Right lobe of liver (tissue), 6 donors: ENCODE measurements at regions of chr2 and their contacts with region 1.

Region 1: GRCh38 chr2:16773080-16773713 is 107.6 kb upstream of the CYRIA start:
- DNase-seq: no peak
- ATAC-seq: peak; percentile 63 to 75 (median 70)
- H3K4me3 ChIP-seq: no peak overlapping the region
- H3K27ac ChIP-seq: no peak overlapping the region
- H3K4me1 ChIP-seq: peaks cover 0 to 5% (median 1%) of the 10 kb centered on the region in 4 donors
- H3K27me3 ChIP-seq: no peaks in the 10 kb centered on the region
- CTCF ChIP-seq: peak; percentile 52 to 73 (median 64)
- POLR2A ChIP-seq: no peak

Region 2: GRCh38 chr2:16881136-16881535 is 107.9 kb after region 1 on chr2:
- intact Hi-C with region 1: no loop called
- DNase-seq: no peak
- ATAC-seq: no peak
- H3K4me3 ChIP-seq: no peak overlapping the region
- H3K27ac ChIP-seq: no peak overlapping the region
- H3K4me1 ChIP-seq: no peaks in the 10 kb centered on the region
- H3K27me3 ChIP-seq: no peaks in the 10 kb centered on the region
- CTCF ChIP-seq: no peak
- POLR2A ChIP-seq: no peak

Region 3: DNA sequence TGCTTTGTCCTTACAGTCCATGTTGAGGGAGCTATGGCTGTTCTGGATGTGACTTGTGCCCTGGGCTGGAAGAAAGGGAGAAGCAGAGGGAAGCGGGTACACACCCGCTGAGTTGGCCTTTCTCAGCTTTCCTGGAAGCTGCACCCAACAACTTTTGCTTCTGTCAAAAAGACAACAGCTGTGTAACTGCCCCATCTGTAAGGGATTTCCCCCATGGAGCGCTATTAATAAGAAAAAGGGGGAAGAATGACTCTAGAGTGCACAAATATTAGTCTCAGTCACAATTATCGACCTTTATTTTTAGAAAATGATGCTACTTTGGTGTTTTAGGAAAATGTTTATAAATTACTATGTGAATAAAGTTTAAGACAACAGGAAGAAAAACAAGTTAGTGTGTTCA is 376.7 kb after region 1 on chr2:
- intact Hi-C with region 1: loop called in 1 of 2 experiments (anchors 10 kb)
- DNase-seq: no peak
- ATAC-seq: no peak
- H3K4me3 ChIP-seq: no peak overlapping the region
- H3K27ac ChIP-seq: no peak overlapping the region
- H3K4me1 ChIP-seq: no peaks in the 10 kb centered on the region
- H3K27me3 ChIP-seq: no peaks in the 10 kb centered on the region
- CTCF ChIP-seq: no peak
- POLR2A ChIP-seq: no peak

Region 4: GRCh38 chr2:17309741-17310339 is 536.6 kb after region 1 on chr2:
- intact Hi-C with region 1: loop called in 1 of 2 experiments (anchors 10 kb)
- DNase-seq: peak in 1 of 3 donors; percentile 60
- ATAC-seq: peak; percentile 97 to 99 (median 98)
- H3K4me3 ChIP-seq: no peak overlapping the region
- H3K27ac ChIP-seq: no peak overlapping the region
- H3K4me1 ChIP-seq: no peaks in the 10 kb centered on the region
- H3K27me3 ChIP-seq: no peaks in the 10 kb centered on the region
- CTCF ChIP-seq: peak; percentile 62 to 82 (median 78)
- POLR2A ChIP-seq: no peak

Region 5: GRCh38 chr2:17460371-17461086 is 687.3 kb after region 1 on chr2:
- intact Hi-C with region 1: no loop called
- DNase-seq: no peak
- ATAC-seq: peak in 1 of 4 donors; percentile 17
- H3K4me3 ChIP-seq: no peak overlapping the region
- H3K27ac ChIP-seq: no peak overlapping the region
- H3K4me1 ChIP-seq: no peaks in the 10 kb centered on the region
- H3K27me3 ChIP-seq: no peaks in the 10 kb centered on the region
- CTCF ChIP-seq: no peak
- POLR2A ChIP-seq: no peak